Calu3 (cell line): ENCODE measurements at regions of chr7 and their contacts with region 1.

Region 1: DNA sequence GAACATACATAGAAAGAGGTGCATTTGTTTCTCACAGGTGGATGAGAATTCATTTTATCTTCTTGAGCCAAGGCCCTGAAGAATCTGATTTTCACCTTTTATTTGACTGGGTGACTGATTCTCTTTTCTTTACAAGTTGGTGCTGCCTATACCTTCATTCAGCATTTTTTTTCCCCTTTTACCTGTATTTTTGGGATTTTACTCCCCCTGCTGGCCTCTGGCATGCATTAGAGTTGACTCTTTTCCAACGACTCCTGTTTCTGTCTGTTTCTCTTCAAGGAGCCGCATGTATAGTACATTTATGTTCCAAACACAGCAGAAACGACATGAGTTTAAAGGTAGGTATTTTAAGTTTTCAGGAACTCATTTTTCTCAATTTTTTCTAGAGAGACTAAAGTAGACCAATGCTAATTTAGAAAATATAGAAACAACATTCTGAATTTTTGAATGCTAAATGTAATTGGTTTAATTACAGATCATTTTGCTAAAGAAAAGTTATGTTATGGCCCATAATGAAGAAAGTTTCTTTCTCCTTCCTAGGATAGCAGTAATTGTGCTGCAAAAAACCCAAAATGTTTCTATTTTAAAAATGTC is 149.8 kb upstream of the HDAC9 start:
- DNase-seq: peak; percentile 74
- H3K4me3 Mint-ChIP-seq: no peak overlapping the region
- H3K27ac Mint-ChIP-seq: no peak overlapping the region
- H3K4me1 Mint-ChIP-seq: no peaks in the 10 kb centered on the region
- H3K27me3 Mint-ChIP-seq: no peaks in the 10 kb centered on the region
- CTCF ChIP-seq: peak; percentile 92

Region 2: DNA sequence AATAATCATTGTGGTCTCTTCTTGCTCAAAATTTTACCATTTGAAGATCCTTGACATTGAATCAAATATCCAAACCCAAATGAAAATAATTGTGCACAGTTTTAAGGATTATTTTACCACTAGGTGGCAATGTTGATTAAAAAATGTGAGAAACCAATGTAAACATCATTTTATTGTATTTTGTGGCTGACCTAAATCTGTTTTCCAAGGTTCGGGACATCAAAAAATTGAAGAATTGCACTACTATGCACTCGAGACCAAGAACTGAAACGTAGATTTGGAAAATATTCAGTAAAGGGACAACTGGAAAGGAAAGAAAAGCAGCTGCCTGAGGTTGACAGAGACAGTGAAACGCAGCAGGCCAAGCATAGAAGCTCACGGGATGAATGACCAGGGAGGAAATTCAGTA is 664.8 kb before region 1 on chr7:
- CTCF ChIA-PET with region 1: interaction called, 4 read pairs
- intact Hi-C with region 1: loop called (anchors 1 kb)
- DNase-seq: no peak
- H3K4me3 Mint-ChIP-seq: no peak overlapping the region
- H3K27ac Mint-ChIP-seq: no peak overlapping the region
- H3K4me1 Mint-ChIP-seq: peaks cover 48% of the 10 kb centered on the region
- H3K27me3 Mint-ChIP-seq: no peaks in the 10 kb centered on the region
- CTCF ChIP-seq: peak; percentile 54

Region 3: GRCh38 chr7:17706734-17707133 is 639.0 kb before region 1 on chr7:
- CTCF ChIA-PET with region 1: interaction called, 12 read pairs
- intact Hi-C with region 1: loop called (anchors 2 kb)
- DNase-seq: peak; percentile 75
- H3K4me3 Mint-ChIP-seq: no peak overlapping the region
- H3K27ac Mint-ChIP-seq: no peak overlapping the region
- H3K4me1 Mint-ChIP-seq: no peaks in the 10 kb centered on the region
- H3K27me3 Mint-ChIP-seq: no peaks in the 10 kb centered on the region
- CTCF ChIP-seq: peak; percentile 84

Region 4: GRCh38 chr7:17971411-17971810 is 374.3 kb before region 1 on chr7:
- CTCF ChIA-PET with region 1: no interaction called
- intact Hi-C with region 1: loop called (anchors 1 kb)
- DNase-seq: no peak
- H3K4me3 Mint-ChIP-seq: no peak overlapping the region
- H3K27ac Mint-ChIP-seq: no peak overlapping the region
- H3K4me1 Mint-ChIP-seq: peaks cover 12% of the 10 kb centered on the region
- H3K27me3 Mint-ChIP-seq: no peaks in the 10 kb centered on the region
- CTCF ChIP-seq: peak; percentile 12

Region 5: DNA sequence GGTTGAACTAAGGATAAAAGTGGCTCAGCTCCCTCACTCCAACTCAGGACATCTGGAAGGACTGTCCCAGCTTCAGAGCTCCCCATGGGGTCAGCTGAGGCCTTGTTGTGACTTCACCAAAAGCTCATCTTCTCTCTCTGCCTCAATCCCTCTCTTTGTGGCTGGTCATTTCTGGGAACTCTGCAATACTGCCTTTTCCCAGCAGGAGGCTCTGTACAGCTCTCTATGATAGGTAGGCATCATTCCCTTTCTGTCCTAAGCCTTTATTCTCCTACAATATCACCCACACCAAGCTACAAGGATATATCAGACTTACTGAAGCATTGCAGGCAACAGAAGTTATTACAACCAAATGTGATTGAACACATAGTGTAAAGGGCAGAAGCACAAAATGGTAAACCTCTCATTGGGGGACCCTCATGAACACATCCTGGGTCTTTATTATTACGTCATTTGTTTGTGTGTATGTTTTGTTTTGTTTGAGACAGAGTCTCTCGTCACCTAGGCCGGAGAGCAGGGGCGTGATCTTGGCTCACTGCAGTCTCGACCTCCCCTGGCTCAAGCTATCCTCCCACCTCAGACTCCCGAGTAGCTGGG is 281.4 kb before region 1 on chr7:
- CTCF ChIA-PET with region 1: interaction called, 6 read pairs
- intact Hi-C with region 1: loop called (anchors 2 kb)
- DNase-seq: peak; percentile 58
- H3K4me3 Mint-ChIP-seq: no peak overlapping the region
- H3K27ac Mint-ChIP-seq: no peak overlapping the region
- H3K4me1 Mint-ChIP-seq: peaks cover 26% of the 10 kb centered on the region
- H3K27me3 Mint-ChIP-seq: no peaks in the 10 kb centered on the region
- CTCF ChIP-seq: peak; percentile 77

Region 6: GRCh38 chr7:18125476-18125875 is 220.3 kb before region 1 on chr7:
- CTCF ChIA-PET with region 1: interaction called, 3 read pairs
- intact Hi-C with region 1: loop called (anchors 2 kb)
- DNase-seq: no peak
- H3K4me3 Mint-ChIP-seq: no peak overlapping the region
- H3K27ac Mint-ChIP-seq: peak overlapping the region; percentile 55
- H3K4me1 Mint-ChIP-seq: peaks cover 51% of the 10 kb centered on the region
- H3K27me3 Mint-ChIP-seq: no peaks in the 10 kb centered on the region
- CTCF ChIP-seq: no peak